PC-9 (cell line): ENCODE measurements at regions of chr6 and their contacts with region 1.

Region 1: GRCh38 chr6:11093589-11094410 is at the start of gene SMIM13:
- DNase-seq: peak; percentile 88 to 96
- H3K4me3 ChIP-seq: peak within 1 kb of the TSS; percentile 76
- H3K27ac ChIP-seq: peak within 1 kb of the TSS; percentile 64
- H3K4me1 ChIP-seq: 0 out of 2 replicates have a peak, but pooled peaks cover 8% of the 10 kb centered on the region
- H3K27me3 ChIP-seq: no peaks in the 10 kb centered on the region
- CTCF ChIP-seq: peak; percentile 56
- total RNA-seq, gene SMIM13: 16.7 and 22.2 TPM in 2 replicates

Region 2: DNA sequence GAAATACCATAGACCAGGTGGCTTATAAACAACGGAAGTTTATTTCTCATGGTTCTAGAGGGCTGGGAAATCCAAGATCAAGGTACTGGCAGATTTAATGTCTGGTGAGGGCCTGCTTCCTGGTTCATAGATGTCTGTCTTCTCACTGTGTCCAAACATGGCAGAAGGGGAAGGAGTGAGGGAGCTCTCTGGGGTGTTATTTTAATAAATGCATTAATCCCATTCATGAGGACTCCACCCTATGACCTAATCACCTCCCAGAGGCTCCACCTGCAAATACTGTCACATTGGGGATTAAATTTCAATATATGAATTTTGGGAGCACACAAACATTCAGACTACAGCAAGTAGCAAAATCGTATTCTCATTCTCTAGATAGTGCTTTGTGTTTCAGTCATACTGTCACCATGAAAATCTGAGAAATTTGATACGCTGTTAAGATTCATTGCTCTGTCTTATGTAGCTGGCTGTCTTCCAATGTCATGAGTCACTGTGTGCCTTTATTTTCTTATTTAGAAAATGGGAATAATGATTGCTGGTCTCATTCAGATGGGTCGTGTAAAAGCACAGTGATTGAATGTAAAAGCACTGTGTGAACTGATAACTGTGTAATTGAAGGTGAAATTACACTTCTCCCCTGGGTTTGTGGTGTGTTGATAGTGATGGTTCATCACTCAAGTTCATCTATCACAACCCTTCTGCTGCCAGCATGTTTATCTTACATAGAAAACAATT is 26.6 kb after region 1 on chr6:
- CTCF ChIA-PET with region 1: no interaction called
- POLR2A ChIA-PET with region 1: interaction called, 14 read pairs
- intact Hi-C with region 1: no loop called
- DNase-seq: peak; percentile 17 to 39
- H3K4me3 ChIP-seq: no peak overlapping the region
- H3K27ac ChIP-seq: 0 out of 2 replicates have a peak overlapping the region, but pooled peaks have one; percentile 29
- H3K4me1 ChIP-seq: peaks cover 15% of the 10 kb centered on the region
- H3K27me3 ChIP-seq: no peaks in the 10 kb centered on the region
- CTCF ChIP-seq: no peak

Region 3: DNA sequence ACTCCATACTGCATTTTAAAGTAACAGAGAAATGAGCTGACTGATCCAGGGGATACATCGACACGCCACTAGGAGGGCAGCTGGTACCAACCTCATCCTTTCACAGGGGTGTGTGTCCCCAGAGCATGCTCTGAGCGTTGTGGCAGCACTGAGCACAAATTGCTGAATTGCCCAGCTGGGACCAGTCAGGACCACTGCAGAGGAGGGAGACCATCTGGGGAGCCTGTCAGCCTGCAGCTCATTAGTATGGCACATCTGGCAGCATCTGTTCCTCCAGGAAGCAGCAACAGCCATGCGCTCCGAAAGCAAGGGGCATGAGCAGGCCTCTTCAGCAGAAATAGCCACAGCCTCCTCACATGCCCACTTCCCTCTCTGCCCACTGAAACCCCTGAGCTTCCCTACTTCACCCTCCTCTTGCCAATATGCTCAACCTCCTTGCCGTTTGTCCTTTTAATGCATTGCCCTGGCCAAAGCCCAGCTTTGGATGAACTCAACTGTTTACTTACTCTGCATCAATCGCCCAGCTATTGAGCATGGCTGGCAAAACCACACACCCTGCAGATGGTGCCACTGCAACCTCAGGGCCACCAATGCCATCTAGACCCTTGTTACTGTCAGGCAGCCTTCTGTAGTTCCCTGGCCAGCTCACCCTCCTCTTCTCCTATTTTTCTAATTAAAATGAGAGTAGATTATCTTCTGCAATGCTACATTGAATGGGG is 216.3 kb after region 1 on chr6:
- CTCF ChIA-PET with region 1: no interaction called
- POLR2A ChIA-PET with region 1: no interaction called
- intact Hi-C with region 1: no loop called
- DNase-seq: no peak
- H3K4me3 ChIP-seq: no peak overlapping the region
- H3K27ac ChIP-seq: no peak overlapping the region
- H3K4me1 ChIP-seq: no peaks in the 10 kb centered on the region
- H3K27me3 ChIP-seq: no peaks in the 10 kb centered on the region
- CTCF ChIP-seq: no peak